HepG2 (cell line): ENCODE measurements at regions of chr5 and their contacts with region 1.

Region 1: GRCh38 chr5:6576861-6577501 is 55.9 kb downstream of the NSUN2 start:
- DNase-seq: peak; percentile 34
- ATAC-seq: peak; percentile 72
- H3K4me3 ChIP-seq: no peak overlapping the region
- H3K27ac ChIP-seq: no peak overlapping the region
- H3K4me1 ChIP-seq: no peaks in the 10 kb centered on the region
- H3K27me3 ChIP-seq: peaks cover 4 to 18% of the 10 kb centered on the region in 2 experiments; a peak in 4 of 5 replicates
- CTCF ChIP-seq: peak; percentile 75
- EP300 ChIP-seq: no peak
- POLR2A ChIP-seq: no peak
- RAD21 ChIP-seq: 0 out of 2 replicates have a peak, but pooled peaks have one; percentile 30

Region 2: DNA sequence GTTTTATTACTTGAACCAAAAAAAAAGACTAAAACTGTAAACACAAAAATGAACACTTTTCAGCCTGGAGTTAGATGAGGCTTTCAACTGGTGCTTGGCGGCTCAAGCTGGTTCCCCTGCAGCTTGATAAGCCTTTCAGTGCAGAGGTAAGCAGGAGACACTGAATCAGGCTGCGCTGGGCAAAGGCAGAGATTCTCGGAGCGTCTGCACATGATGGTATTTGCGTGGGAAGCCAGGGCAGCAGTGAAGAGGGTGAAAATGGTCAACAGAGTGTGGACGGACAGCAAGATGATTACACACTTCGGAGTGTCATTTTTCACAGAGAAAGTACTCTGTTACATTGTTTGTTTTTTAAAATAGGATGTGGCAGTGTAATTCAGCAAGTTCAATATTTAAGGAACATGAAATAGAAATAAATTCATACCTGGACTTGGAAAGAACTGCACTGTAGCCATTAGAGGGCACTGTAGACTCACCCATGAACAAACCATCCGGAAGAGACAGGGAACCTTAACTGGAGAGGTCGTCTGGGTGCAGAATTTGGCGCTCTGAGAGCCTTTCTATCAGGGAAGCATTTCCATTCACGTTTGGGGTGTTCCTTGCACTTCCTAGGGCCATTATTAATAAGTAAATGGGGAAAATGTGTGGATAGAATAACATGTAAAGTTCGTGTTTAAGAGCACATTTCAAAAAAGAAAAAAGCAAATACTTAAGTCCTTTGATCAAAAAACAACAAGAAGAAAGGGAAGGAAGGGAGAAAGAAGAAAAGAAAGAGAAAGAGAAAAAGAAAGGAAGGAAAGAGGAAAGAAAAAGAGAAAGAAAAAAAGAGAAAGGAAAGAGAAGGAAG is 1084.7 kb before region 1 on chr5:
- CTCF ChIA-PET with region 1: interaction called, 4 read pairs
- POLR2A ChIA-PET with region 1: no interaction called
- in situ Hi-C with region 1: loop called (anchors 10 kb)
- intact Hi-C with region 1: no loop called
- DNase-seq: peak; percentile 54
- ATAC-seq: peak; percentile 38; the same call in 2 of the 3 replicates
- H3K4me3 ChIP-seq: no peak overlapping the region
- H3K27ac ChIP-seq: no peak overlapping the region
- H3K4me1 ChIP-seq: no peaks in the 10 kb centered on the region; the same call in 1 of the 2 replicates
- H3K27me3 ChIP-seq: peaks cover 0 to 6% of the 10 kb centered on the region in 2 experiments; a peak in 2 of 5 replicates
- CTCF ChIP-seq: peak; percentile 71
- EP300 ChIP-seq: no peak
- POLR2A ChIP-seq: no peak
- RAD21 ChIP-seq: peak; percentile 45; the same call in 1 of the 2 replicates

Region 3: GRCh38 chr5:5886812-5887486 is 690.0 kb before region 1 on chr5:
- CTCF ChIA-PET with region 1: no interaction called
- POLR2A ChIA-PET with region 1: no interaction called
- in situ Hi-C with region 1: loop called (anchors 25 kb)
- intact Hi-C with region 1: loop called (anchors 5 kb)
- DNase-seq: peak; percentile 3
- ATAC-seq: peak; percentile 99
- H3K4me3 ChIP-seq: no peak overlapping the region
- H3K27ac ChIP-seq: no peak overlapping the region
- H3K4me1 ChIP-seq: no peaks in the 10 kb centered on the region
- H3K27me3 ChIP-seq: peaks cover 0 to 3% of the 10 kb centered on the region in 2 experiments; a peak in 1 of 5 replicates
- CTCF ChIP-seq: peak; percentile 83
- EP300 ChIP-seq: no peak
- POLR2A ChIP-seq: no peak
- RAD21 ChIP-seq: 0 out of 2 replicates have a peak, but pooled peaks have one; percentile 53

Region 4: DNA sequence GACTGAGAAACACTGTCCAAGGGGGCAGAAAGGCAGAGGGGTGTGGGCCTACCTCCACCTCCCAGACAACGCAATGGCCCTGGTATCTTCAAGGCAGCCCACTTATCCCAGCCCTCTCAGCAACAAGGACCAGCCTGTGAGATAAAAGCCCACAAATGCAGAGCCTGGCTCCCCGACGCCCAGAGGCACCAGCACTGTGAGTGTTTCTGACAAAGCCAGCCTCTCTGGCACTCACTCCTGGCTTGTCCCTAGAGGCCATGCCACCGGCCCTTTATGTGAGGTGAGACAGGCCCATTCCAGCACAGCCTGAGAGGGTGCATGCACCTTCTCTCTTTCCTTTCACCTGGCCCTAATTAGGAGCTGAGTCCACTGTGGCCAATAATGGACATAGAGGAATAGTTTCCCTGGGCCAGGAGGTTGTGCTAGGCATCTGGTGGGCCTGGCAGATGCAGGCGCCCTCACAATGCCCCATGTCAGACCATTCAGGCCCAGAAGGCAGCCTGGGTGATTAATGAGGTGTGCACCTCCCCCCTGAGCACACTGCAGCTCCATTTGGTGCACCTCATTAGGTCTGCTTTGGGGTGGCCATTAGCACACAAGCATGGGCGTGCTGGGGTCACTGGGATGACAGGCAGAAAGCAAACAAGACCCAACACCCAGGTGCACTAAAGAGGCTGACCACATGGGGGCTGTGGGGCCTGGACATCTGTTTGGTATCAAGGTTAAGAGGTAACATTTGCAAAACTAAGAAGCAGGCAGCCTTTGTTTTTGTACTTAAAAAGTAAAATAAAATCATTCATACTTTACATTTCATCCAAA is 374.6 kb before region 1 on chr5:
- CTCF ChIA-PET with region 1: no interaction called
- POLR2A ChIA-PET with region 1: no interaction called
- in situ Hi-C with region 1: no loop called
- intact Hi-C with region 1: loop called (anchors 2 kb)
- DNase-seq: peak; percentile 19
- ATAC-seq: peak; percentile 87
- H3K4me3 ChIP-seq: no peak overlapping the region
- H3K27ac ChIP-seq: no peak overlapping the region
- H3K4me1 ChIP-seq: no peaks in the 10 kb centered on the region
- H3K27me3 ChIP-seq: no peaks in the 10 kb centered on the region
- CTCF ChIP-seq: peak; percentile 37
- EP300 ChIP-seq: no peak
- POLR2A ChIP-seq: no peak
- RAD21 ChIP-seq: 0 out of 2 replicates have a peak, but pooled peaks have one; percentile 25

Region 5: GRCh38 chr5:6475626-6476312 is 101.2 kb before region 1 on chr5:
- CTCF ChIA-PET with region 1: no interaction called
- POLR2A ChIA-PET with region 1: no interaction called
- in situ Hi-C with region 1: no loop called
- intact Hi-C with region 1: no loop called
- DNase-seq: no peak
- ATAC-seq: no peak
- H3K4me3 ChIP-seq: no peak overlapping the region
- H3K27ac ChIP-seq: no peak overlapping the region
- H3K4me1 ChIP-seq: no peaks in the 10 kb centered on the region
- H3K27me3 ChIP-seq: peaks cover 0 to 9% of the 10 kb centered on the region in 2 experiments; a peak in 1 of 5 replicates
- CTCF ChIP-seq: no peak
- EP300 ChIP-seq: no peak
- POLR2A ChIP-seq: no peak
- RAD21 ChIP-seq: no peak